Calu3 (cell line): ENCODE measurements at regions of chr7 and their contacts with region 1.

Region 1: GRCh38 chr7:13829914-13830900 is 159.3 kb downstream of the ETV1 start:
- DNase-seq: peak; percentile 41
- H3K4me3 Mint-ChIP-seq: no peak overlapping the region
- H3K27ac Mint-ChIP-seq: peak overlapping the region; percentile 57
- H3K4me1 Mint-ChIP-seq: peaks cover 21% of the 10 kb centered on the region
- H3K27me3 Mint-ChIP-seq: no peaks in the 10 kb centered on the region
- CTCF ChIP-seq: no peak

Region 2: GRCh38 chr7:13117103-13117502 is 713.1 kb before region 1 on chr7:
- CTCF ChIA-PET with region 1: no interaction called
- intact Hi-C with region 1: no loop called
- DNase-seq: peak; percentile 20
- H3K4me3 Mint-ChIP-seq: no peak overlapping the region
- H3K27ac Mint-ChIP-seq: no peak overlapping the region
- H3K4me1 Mint-ChIP-seq: peaks cover 16% of the 10 kb centered on the region
- H3K27me3 Mint-ChIP-seq: no peaks in the 10 kb centered on the region
- CTCF ChIP-seq: peak; percentile 63

Region 3: GRCh38 chr7:13790611-13791010 is 39.6 kb before region 1 on chr7:
- CTCF ChIA-PET with region 1: no interaction called
- intact Hi-C with region 1: loop called (anchors 1 kb)
- DNase-seq: no peak
- H3K4me3 Mint-ChIP-seq: no peak overlapping the region
- H3K27ac Mint-ChIP-seq: no peak overlapping the region
- H3K4me1 Mint-ChIP-seq: no peaks in the 10 kb centered on the region
- H3K27me3 Mint-ChIP-seq: no peaks in the 10 kb centered on the region
- CTCF ChIP-seq: no peak

Region 4: DNA sequence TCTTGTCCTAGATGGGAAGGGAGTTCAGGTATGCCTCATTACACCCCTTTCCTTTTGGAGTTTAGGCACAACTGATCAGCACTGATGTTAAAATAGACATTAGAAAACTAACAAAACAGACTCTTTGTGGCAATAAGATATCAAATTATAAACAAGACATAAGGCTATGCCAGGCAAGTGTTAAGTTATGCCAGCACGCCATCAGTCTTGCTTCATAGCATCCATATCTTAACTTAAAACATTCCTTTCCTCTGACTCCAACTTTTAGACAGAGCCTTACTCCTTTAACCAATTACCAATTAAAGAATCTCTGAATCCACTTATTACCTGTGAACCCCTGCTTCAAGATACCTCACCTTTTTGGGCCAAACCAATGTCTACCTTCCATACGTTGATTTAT is 285.5 kb after region 1 on chr7:
- CTCF ChIA-PET with region 1: no interaction called
- intact Hi-C with region 1: no loop called
- DNase-seq: no peak
- H3K4me3 Mint-ChIP-seq: no peak overlapping the region
- H3K27ac Mint-ChIP-seq: no peak overlapping the region
- H3K4me1 Mint-ChIP-seq: peaks cover 8% of the 10 kb centered on the region
- H3K27me3 Mint-ChIP-seq: no peaks in the 10 kb centered on the region
- CTCF ChIP-seq: no peak